ENCODE measurements at regions of chr2 and their contacts with region 1.

Region 1: GRCh38 chr2:120774557-120775160 is 39.0 kb downstream of the GLI2 start:
- DNase-seq: no peak
- H3K4me3 ChIP-seq: no peak overlapping the region
- H3K27ac ChIP-seq: no peak overlapping the region
- H3K4me1 ChIP-seq: no peaks in the 10 kb centered on the region
- H3K27me3 ChIP-seq: no peaks in the 10 kb centered on the region
- CTCF ChIP-seq: no peak

Region 2: DNA sequence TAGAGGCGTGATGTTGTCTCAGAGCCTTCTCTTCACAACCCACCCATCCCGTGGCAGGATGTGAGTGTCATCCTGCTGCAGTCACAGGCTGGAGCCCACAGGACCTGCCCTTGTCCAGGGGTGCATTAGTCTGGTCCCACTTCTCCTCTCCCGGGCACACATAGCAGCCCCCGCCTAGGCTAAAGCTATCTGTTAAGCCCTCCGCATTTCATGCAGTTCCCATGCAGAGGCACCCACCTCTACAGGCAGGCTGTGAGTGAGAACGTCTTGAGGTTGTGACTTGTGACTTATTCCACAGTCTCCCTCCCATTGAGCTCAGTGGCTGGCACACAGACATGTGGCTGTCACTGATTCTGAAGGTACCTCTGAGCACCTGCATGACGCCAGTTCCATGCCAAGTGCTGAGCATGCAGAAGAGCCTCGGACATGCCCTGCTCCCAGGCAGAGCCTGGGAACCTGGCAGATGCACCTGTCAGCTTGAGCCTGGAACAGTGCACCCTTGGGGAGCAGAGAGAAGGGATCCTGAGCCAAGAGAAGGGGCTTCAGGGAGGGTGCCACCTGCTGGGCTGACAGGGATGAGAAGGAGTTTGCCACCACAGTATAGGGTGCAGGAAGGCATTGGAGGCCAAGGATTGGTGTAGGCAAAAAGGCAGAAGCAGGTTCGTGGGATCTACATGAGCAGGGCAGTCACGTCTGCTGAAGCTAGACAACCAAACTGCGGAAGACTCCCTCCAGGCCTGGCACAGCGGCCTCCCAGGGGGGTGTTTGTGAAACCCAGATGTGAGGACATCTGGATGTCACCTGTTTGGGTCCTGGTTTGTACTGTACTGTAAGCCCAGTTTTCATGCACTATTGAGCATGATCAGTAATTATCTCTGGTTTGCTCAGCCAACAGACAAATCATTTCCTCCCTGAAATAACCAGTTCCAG is 174.6 kb after region 1 on chr2:
- CTCF ChIA-PET with region 1: no interaction called
- dilution Hi-C with region 1: no loop called
- in situ Hi-C with region 1: no loop called
- intact Hi-C with region 1: no loop called
- DNase-seq: no peak
- H3K4me3 ChIP-seq: no peak overlapping the region
- H3K27ac ChIP-seq: no peak overlapping the region
- H3K4me1 ChIP-seq: peaks cover under 1% of the 10 kb centered on the region
- H3K27me3 ChIP-seq: peaks cover 6% of the 10 kb centered on the region
- CTCF ChIP-seq: peak; percentile 17 to 54

Region 3: GRCh38 chr2:121071034-121071504 is 296.4 kb after region 1 on chr2:
- CTCF ChIA-PET with region 1: no interaction called
- dilution Hi-C with region 1: no loop called
- in situ Hi-C with region 1: no loop called
- intact Hi-C with region 1: loop called (anchors 1 kb)
- DNase-seq: no peak
- H3K4me3 ChIP-seq: no peak overlapping the region
- H3K27ac ChIP-seq: no peak overlapping the region
- H3K4me1 ChIP-seq: peaks cover 5% of the 10 kb centered on the region
- H3K27me3 ChIP-seq: no peaks in the 10 kb centered on the region
- CTCF ChIP-seq: peak; percentile 72 to 88

Measured in mammary epithelial cell (primary cell).